ENCODE measurements at regions of chr7 and their contacts with region 1.

Region 1: DNA sequence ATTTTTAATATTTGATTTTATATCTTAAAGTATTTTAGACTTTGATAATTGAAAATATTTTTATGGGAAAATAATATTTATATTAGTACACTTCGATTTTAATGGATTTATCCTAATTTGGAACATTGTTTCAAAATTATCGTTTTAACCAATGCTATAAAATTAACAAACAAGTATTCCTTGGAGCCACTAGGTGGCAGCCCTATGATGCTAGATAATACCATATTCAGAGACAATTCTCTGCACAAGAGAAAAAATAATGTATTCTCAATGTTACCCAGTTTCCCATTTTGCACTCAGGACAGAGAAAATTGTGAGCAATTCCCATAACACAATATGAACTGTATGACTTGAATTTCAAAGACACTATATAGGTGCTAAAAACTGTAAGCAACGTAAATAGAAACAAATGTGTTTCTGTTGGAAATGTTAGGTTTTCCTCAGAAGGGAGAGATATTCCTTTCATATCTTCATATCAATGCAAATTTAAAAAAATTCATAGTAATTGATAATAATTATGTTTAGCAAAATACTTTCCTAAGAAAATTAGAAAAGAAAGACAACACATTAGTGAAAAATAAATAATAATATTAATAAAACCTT is 237.8 kb downstream of the SEMA3E start:
- DNase-seq: no peak
- ATAC-seq: no peak
- H3K4me3 ChIP-seq: no peak overlapping the region
- H3K27ac ChIP-seq: no peak overlapping the region
- H3K4me1 ChIP-seq: no peaks in the 10 kb centered on the region
- H3K27me3 ChIP-seq: no peaks in the 10 kb centered on the region

Region 2: DNA sequence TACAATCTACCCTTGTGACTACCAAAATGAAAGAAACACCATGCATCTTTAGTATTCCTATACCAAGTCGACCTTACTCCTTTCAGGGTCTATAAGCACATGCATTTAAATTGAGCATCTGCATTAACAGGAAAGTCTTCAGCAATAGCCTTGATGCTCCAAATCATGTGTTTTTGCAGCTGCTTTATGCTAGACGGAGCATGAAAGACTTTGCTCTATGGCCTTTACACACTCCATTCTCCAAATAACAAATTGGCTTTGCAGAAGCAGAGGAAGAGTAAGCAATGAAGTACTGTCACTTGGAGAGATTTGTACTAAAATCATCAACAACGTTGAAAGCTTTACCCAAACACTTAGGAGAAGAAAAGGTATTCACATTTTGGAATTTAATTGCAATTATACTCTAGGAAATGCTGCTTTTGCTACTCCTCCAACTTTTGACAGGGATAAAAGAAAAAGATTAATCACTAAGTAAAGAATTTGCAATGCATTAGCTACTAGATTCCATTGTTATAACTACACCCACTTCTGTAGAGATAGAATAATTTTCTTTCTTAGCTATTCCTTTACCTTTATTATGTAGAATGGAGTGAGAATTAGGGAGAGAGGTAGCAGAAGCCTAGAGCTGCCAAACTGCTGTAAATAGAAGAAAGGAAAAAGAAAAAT is 106.1 kb after region 1 on chr7:
- intact Hi-C with region 1: loop called in 1 of 2 experiments (anchors 10 kb)
- DNase-seq: no peak
- ATAC-seq: no peak
- H3K4me3 ChIP-seq: no peak overlapping the region
- H3K27ac ChIP-seq: no peak overlapping the region
- H3K4me1 ChIP-seq: no peaks in the 10 kb centered on the region
- H3K27me3 ChIP-seq: no peaks in the 10 kb centered on the region

Region 3: GRCh38 chr7:83655951-83656556 is 245.0 kb after region 1 on chr7:
- intact Hi-C with region 1: loop called (anchors 1 to 2 kb)
- DNase-seq: no peak
- ATAC-seq: no peak
- H3K4me3 ChIP-seq: no peak overlapping the region
- H3K27ac ChIP-seq: no peak overlapping the region
- H3K4me1 ChIP-seq: no peaks in the 10 kb centered on the region
- H3K27me3 ChIP-seq: no peaks in the 10 kb centered on the region

Region 4: GRCh38 chr7:84161398-84161797 is 750.3 kb after region 1 on chr7:
- intact Hi-C with region 1: no loop called
- DNase-seq: no peak
- ATAC-seq: no peak
- H3K4me3 ChIP-seq: no peak overlapping the region
- H3K27ac ChIP-seq: no peak overlapping the region
- H3K4me1 ChIP-seq: no peaks in the 10 kb centered on the region
- H3K27me3 ChIP-seq: no peaks in the 10 kb centered on the region

Measured in aorta (tissue), 5 donors.